Activated CD4-positive, alpha-beta T cell treated with anti-CD3 and anti-CD28 coated beads, Interleukin-2, amount 10 ng/mL, durations not matched to agents 24 days and 14 days (primary cell): ENCODE measurements at regions of chr11 and their contacts with region 1.

Region 1: GRCh38 chr11:96188243-96189006 is 154.6 kb downstream of the MAML2 start:
- DNase-seq: peak; percentile 74
- H3K4me3 Mint-ChIP-seq: peak overlapping the region; percentile 26
- H3K27ac Mint-ChIP-seq: peak overlapping the region; percentile 66
- H3K4me1 Mint-ChIP-seq: peaks cover 52% of the 10 kb centered on the region
- H3K27me3 Mint-ChIP-seq: no peaks in the 10 kb centered on the region

Region 2: GRCh38 chr11:96075532-96075959 is 112.9 kb before region 1 on chr11:
- intact Hi-C with region 1: loop called (anchors 1 kb)
- DNase-seq: no peak
- H3K4me3 Mint-ChIP-seq: peak overlapping the region; percentile 47
- H3K27ac Mint-ChIP-seq: peak overlapping the region; percentile 58
- H3K4me1 Mint-ChIP-seq: peaks cover 51% of the 10 kb centered on the region
- H3K27me3 Mint-ChIP-seq: no peaks in the 10 kb centered on the region

Region 3: DNA sequence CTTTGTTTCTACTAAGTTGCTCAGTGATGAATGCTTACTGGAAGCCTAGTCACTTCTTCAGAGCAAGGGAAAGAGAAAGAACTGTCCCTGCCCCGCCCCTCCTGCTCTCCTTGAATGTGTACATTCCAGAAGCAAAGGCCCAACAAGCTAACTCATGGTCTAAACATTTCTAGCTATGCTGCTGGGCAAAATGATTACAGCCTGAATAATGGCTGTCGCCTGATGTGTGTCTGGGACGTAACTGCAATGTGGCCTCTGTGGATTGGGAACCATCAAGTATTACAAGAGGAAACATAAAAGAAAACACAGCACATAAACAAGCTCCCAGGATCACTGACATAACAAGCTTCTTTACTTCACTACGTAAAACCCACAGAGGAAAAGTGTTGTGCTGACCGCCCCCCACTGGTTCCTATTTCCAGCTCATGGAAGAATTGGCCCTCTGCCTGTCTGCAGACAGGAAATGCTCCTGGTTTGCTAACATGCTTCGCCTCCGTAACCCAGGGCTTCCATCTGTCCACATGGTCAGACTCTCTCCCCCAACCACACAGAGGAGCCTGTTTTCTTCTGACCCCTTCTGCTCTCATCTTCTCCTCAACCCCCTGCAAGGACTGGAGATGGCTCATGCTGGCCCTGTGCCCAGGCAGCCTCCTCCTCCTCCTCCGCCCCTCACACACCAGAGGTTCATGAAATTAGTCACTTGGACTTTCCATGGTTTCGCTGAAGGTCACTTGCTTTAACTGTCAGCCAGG is 32.6 kb before region 1 on chr11:
- intact Hi-C with region 1: loop called (anchors 1 kb)
- DNase-seq: peak; percentile 79
- H3K4me3 Mint-ChIP-seq: peak overlapping the region; percentile 65
- H3K27ac Mint-ChIP-seq: peak overlapping the region; percentile 95
- H3K4me1 Mint-ChIP-seq: peaks cover 54% of the 10 kb centered on the region
- H3K27me3 Mint-ChIP-seq: no peaks in the 10 kb centered on the region

Region 4: DNA sequence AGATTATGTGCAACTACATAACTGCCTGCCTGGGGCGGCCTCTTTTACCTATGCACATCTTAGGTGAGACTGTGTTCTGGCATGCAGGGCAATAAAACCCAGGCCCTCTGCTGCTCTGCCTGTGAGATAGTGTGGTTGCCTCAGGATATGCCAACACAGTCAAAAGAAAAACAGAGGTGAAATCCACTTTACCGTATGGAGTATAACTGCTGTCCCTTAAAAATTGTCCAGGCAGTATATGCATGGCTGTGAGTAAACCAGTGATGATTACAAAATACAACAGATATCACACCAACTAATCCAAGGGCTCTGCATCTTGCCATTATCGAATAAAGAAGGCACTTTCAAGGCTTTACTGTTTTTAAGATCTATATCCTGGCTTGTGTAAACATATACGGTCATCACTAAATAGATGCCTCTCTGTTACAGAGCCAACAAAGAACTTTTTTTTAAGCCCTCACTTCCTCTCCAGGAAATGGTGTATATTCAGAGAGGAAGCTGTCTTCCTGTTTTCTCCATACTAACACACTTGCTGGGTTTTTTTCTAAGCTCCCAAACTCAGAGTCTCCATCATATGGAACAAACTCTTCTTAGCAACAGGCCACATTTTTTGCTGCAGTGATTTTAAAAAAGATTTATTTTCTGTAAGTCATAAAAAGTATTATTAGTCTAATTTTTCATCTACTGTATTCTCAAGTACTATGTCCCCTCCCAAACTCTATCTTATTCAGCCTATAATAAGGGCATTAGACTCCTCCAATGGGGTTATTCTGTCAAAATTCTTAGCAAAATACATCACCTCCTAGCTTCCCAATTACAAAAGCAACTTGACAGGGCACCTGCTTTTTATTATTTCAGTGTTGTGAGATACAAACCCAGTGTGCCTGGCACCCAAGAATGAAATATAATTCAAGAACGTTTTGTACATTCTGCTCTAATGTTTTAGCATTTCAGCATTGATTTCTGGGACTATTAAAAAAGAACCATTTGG is 19.3 kb after region 1 on chr11:
- intact Hi-C with region 1: loop called (anchors 1 kb)
- DNase-seq: peak; percentile 78
- H3K4me3 Mint-ChIP-seq: peak overlapping the region; percentile 74
- H3K27ac Mint-ChIP-seq: peak overlapping the region; percentile 93
- H3K4me1 Mint-ChIP-seq: peaks cover 71% of the 10 kb centered on the region
- H3K27me3 Mint-ChIP-seq: no peaks in the 10 kb centered on the region

Region 5: DNA sequence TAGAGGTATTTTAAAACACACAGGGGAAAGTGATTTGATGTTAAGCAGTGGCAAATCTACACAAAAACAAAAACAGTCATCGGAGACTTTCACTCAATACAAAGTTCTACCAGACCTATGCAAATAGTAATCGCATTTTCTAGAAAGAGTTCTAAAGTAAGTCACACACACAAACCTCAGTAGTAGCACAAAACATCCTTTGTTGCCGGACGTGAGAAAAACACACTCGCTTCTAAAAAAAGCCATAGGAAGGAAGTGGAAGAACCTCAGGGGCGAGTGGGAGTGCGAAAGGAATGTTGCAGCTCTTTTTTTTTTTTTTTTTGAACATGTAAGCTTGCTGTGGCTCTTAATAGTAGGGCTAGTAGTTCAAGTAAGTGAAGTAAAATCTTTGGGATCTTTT is 65.7 kb after region 1 on chr11:
- intact Hi-C with region 1: loop called (anchors 2 kb)
- DNase-seq: peak; percentile 83
- H3K4me3 Mint-ChIP-seq: peak overlapping the region; percentile 79
- H3K27ac Mint-ChIP-seq: peak overlapping the region; percentile 84
- H3K4me1 Mint-ChIP-seq: peaks cover 73% of the 10 kb centered on the region
- H3K27me3 Mint-ChIP-seq: no peaks in the 10 kb centered on the region

Region 6: DNA sequence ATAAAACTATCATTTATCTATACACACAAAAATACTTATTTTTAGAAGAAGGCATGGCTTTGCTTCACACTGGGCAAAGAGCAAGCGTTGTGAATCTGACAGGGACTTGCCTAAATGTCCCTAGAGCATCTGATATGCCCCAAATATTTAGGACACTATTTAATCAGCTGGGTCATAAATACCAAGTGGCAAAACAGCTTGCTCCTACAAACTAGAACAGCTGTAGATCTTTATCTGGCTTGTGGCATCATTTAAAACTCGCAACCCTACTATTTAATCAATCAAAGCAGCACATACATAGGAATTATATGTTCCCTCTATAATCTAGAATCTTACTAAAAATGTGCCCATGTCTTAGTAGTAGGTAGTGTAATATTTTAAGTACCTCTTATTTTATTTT is 1200.8 kb after region 1 on chr11:
- intact Hi-C with region 1: no loop called
- DNase-seq: no peak
- H3K4me3 Mint-ChIP-seq: no peak overlapping the region
- H3K27ac Mint-ChIP-seq: no peak overlapping the region
- H3K4me1 Mint-ChIP-seq: no peaks in the 10 kb centered on the region
- H3K27me3 Mint-ChIP-seq: no peaks in the 10 kb centered on the region